ENCODE measurements at regions of chr16 and their contacts with region 1.

Region 1: GRCh38 chr16:88785106-88785924 is at the start of gene PIEZO1:
- DNase-seq: peak in 41 of 42 donors; percentile 33 to 90 (median 77)

Region 2: DNA sequence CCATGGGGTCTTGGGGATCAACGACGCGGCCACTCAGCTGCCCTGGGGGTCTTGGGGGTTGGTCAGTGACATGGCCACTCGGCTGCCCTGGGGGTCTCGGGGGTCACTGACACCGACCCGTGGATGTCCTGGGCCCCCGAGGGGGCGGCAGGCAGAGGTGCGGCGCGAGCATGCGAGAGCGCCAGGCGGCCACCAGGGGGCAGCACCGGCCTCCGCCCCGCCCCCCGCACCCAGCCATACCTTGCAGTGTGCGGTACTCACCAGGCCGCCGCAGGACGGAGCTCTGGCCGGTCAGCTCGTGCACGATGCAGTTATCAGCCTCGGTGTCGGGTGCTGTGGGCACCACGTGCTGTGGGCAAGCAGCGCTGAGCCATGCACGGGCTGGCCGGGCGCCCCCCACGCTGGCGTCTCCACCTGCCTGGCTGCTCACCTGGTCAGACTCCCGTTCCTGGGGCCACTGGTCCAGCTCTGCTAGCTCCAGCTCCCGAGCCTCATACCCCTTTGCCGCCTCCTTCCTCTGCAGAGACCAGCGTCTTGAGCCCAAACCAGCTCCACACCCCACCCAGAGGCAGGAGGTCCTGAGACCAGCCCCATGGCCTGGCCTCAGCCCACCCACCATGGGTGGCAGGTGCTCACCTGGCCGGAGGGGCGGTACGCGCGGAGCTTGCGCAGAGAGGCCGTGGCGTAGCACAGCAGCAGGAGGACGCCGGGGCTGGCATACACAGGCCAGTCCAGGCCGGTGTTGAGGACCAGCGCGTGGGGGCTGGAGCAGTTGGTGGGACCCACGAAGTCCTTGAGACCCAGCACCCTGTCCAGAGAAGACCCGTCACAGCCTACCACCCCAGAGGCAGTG is 47.8 kb before region 1 on chr16:
- intact Hi-C with region 1: loop called (anchors 2 kb)
- DNase-seq: peak in 41 of 42 donors; percentile 19 to 87 (median 65)

Region 3: DNA sequence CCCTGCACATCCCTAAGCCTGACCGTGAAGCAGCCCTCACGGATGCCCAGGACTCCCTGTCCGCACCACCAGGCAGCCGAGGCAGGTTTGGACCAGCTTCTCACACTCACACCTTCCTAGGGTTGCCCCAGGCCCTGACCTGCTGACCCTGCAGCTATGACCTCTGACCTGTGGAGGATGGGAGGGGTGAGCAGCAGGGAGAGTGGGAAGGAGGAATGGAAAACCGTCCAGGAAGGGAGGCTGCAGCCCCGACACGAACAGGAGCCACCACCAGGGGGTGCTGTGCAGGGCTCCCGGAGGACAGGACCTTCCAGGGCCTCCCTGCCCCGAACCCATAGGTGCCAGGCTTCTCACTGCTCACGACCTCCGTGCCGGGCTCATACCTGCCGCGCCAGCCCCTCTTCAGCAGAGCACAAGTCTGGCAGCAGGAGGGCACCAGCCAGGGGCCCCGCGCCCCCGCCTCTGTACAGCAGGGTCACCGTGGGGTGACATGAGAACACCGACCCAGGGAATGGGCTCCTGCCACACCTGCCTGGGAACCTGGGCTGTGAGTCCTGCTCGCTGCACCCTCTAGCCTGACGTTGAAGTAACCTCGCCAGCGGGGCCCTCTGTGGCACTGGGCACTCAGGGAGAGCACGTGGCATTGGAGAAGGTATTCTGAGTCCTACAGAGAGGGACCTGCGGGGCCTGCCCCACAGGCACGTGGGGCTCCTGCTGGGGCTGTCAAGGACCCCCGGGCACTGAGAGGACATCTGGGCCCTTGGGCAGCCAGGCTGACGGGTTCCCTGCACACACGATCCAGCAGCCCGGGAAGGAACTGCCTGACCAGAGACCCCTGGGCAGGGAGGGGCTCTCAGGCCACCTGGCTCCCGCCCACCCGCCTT is 41.4 kb before region 1 on chr16:
- intact Hi-C with region 1: loop called (anchors 2 kb)
- DNase-seq: peak; percentile 47 to 92 (median 79)